Transverse colon (tissue), 4 donors: ENCODE measurements at regions of chr2 and their contacts with region 1.

Region 1: DNA sequence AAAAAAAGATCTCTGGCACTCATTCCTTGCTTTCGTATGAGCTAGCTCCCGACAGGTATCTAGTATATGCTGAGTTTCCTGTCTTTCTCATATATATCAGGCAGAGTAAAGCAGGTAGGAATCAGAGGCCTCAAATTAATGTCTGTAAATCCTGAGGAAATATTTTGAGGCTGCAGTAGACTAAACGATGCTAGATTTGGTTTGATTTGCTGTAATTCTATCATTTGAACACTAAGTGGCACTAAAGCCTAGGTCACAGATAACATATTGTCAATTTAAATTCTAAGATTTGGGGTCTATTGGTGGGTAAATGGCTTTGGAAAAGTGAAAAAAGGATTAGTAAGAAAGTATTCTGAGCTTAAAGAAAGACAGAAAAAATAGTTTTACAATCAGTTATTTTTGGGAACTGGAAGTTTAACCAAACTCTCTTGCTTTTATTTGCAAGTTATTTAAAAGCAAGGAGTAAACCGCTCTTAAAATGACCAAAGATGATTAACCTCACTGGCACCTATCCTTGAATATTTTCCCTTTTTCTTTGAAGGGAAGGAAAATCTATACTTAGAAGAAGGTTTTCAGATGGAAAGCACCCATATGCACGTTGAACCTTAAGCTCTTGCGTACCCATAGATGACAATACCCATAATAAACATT is 37.6 kb upstream of the SLC4A10 start:
- DNase-seq: no peak
- H3K4me3 ChIP-seq: no peak overlapping the region
- H3K27ac ChIP-seq: no peak overlapping the region
- H3K4me1 ChIP-seq: peaks cover 0 to 6% (median 0%) of the 10 kb centered on the region in 4 donors
- H3K27me3 ChIP-seq: no peaks in the 10 kb centered on the region
- CTCF ChIP-seq: peak; percentile 57 to 69 (median 61)
- EP300 ChIP-seq: no peak
- POLR2A ChIP-seq: no peak

Region 2: DNA sequence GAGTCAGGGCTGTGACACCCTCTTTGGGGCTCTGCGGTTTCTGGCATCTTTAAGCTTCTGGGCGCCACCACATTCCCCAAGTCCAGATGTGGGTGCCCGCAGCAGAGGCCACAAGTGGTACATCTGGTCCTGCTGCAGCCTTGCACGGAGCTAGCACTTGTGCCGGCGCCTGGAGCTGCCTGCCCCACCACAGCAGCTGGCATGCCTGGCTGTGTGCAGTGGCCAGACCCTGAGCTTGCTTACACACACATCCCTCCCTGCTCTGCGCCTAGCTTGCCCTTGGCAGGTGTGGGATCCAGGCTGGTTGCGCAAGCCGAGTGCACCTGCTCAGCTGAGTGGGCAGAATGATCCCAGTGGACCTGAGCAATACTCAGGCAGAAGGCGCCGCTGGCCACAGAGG is 64.9 kb after region 1 on chr2:
- in situ Hi-C with region 1: no loop called
- intact Hi-C with region 1: no loop called
- DNase-seq: no peak
- H3K4me3 ChIP-seq: no peak overlapping the region
- H3K27ac ChIP-seq: no peak overlapping the region
- H3K4me1 ChIP-seq: no peaks in the 10 kb centered on the region
- H3K27me3 ChIP-seq: no peaks in the 10 kb centered on the region
- CTCF ChIP-seq: no peak
- EP300 ChIP-seq: no peak
- POLR2A ChIP-seq: no peak

Region 3: GRCh38 chr2:161946489-161947107 is 360.0 kb after region 1 on chr2:
- in situ Hi-C with region 1: loop called in 3 of 4 experiments (anchors 5 to 10 kb)
- intact Hi-C with region 1: no loop called
- DNase-seq: no peak
- H3K4me3 ChIP-seq: no peak overlapping the region
- H3K27ac ChIP-seq: no peak overlapping the region
- H3K4me1 ChIP-seq: peaks cover 0 to 10% (median 0%) of the 10 kb centered on the region in 4 donors
- H3K27me3 ChIP-seq: no peaks in the 10 kb centered on the region
- CTCF ChIP-seq: peak in 4 of 5 experiments; percentile 48 to 52 (median 49)
- EP300 ChIP-seq: no peak
- POLR2A ChIP-seq: no peak